Dendritic cell treated with granulocyte-macrophage colony-stimulating factor and Interleukin-4, amounts not matched to agents 40 ng/mL and 50 ng/mL, for 4 days (primary cell): ENCODE measurements at regions of chr9 and their contacts with region 1.

Region 1: DNA sequence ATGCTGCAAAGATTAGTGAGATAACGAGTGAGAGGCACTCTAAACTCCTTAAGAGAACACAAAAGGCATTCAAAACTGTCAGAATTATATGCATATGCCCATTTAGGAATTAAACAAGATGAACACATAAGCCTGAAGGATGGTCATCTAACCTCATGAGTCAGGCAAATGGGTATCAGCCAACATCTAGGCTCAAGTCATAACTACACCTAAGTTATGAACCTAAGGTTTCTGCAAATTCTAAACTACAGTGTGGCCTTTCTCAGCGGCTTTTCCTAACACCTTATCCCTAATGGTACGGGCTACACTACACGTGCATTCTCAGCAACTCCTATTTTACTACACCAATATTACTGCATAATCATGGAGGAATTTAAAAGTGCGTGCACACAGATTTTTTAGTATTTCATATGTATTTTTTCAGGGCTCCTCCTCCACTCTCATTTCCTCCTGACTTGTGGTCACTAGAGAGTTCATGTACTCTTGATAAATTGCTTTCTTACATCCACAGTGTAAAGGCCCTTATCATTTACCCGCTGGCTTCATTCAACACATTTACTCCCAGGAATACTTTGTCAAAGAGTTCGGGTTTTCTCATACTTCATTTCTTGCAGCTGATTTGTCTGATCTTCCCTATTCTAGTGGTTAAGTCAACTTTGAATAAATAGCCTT is 316.5 kb downstream of the BNC2 start:
- H3K4me3 Mint-ChIP-seq: no peak overlapping the region
- H3K27ac Mint-ChIP-seq: no peak overlapping the region
- H3K4me1 Mint-ChIP-seq: no peaks in the 10 kb centered on the region
- H3K27me3 Mint-ChIP-seq: no peaks in the 10 kb centered on the region

Region 2: GRCh38 chr9:16368237-16369087 is 185.5 kb before region 1 on chr9:
- intact Hi-C with region 1: loop called (anchors 5 kb)
- H3K4me3 Mint-ChIP-seq: no peak overlapping the region
- H3K27ac Mint-ChIP-seq: no peak overlapping the region
- H3K4me1 Mint-ChIP-seq: no peaks in the 10 kb centered on the region
- H3K27me3 Mint-ChIP-seq: peaks cover 13% of the 10 kb centered on the region